ENCODE measurements at regions of chr11 and their contacts with region 1.

Region 1: DNA sequence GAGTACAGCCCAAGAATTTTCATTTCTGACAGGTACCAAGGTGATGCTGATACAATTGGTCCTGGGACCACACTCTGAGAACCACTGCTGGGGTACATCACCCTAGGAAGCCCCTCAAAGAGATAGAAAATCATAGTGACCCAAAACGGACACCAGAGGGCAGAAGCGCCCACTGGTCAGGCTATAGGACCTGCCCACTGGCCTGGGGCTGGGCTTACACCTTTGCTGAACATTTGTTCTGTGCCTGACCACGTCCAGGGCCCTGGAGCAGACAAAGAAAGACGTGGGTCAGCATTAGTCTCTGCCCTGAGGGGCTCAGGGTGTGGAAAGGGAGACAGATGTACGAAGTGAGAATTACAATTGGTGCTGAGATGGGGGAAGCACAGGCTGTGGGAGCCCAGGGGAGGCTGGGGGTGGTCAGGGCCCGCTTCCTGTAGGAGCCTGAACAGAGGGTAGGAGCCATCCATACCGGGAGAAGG is 14.4 kb upstream of the SERPINH1 start:
- DNase-seq: peak; percentile 64
- ATAC-seq: peak; percentile 93
- H3K4me3 ChIP-seq: no peak overlapping the region; a peak in 1 of 6 replicates
- H3K27ac ChIP-seq: no peak overlapping the region
- H3K4me1 ChIP-seq: peaks cover 6% of the 10 kb centered on the region; the same call in 1 of the 2 replicates
- H3K27me3 ChIP-seq: peaks cover 0 to 17% of the 10 kb centered on the region in 2 experiments; a peak in 3 of 5 replicates
- CTCF ChIP-seq: peak; percentile 92
- EP300 ChIP-seq: no peak
- POLR2A ChIP-seq: no peak
- RAD21 ChIP-seq: peak; percentile 81

Region 2: DNA sequence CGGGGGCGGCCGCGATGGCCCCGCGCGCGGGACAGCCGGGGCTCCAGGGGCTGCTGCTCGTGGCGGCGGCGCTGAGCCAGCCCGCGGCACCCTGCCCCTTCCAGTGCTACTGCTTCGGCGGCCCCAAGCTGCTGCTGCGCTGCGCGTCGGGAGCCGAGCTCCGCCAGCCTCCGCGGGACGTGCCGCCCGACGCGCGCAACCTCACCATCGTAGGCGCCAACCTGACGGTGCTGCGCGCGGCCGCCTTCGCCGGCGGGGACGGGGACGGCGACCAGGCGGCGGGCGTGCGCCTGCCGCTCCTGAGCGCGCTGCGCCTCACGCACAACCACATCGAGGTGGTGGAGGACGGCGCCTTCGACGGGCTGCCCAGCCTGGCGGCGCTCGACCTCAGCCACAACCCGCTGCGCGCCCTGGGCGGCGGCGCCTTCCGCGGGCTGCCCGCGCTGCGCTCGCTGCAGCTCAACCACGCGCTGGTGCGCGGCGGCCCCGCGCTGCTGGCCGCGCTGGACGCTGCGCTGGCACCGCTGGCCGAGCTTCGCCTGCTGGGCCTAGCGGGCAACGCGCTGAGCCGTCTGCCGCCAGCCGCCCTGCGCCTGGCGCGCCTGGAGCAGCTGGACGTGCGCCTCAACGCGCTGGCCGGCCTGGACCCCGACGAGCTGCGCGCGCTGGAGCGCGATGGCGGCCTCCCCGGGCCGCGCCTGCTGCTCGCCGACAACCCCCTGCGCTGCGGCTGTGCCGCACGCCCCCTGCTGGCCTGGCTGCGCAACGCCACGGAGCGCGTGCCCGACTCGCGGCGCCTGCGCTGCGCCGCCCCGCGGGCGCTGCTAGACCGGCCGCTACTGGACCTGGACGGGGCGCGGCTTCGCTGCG is 306.3 kb before region 1 on chr11:
- CTCF ChIA-PET with region 1: no interaction called
- POLR2A ChIA-PET with region 1: no interaction called
- in situ Hi-C with region 1: no loop called
- intact Hi-C with region 1: no loop called
- DNase-seq: peak; percentile 57
- ATAC-seq: peak; percentile 86
- H3K4me3 ChIP-seq: peak overlapping the region; percentile 46 to 74 (median 46); a peak in 5 of 6 replicates
- H3K27ac ChIP-seq: no peak overlapping the region
- H3K4me1 ChIP-seq: peaks cover 15% of the 10 kb centered on the region; the same call in 1 of the 2 replicates
- H3K27me3 ChIP-seq: peaks cover 15 to 63% of the 10 kb centered on the region in 2 experiments
- CTCF ChIP-seq: peak; percentile 76
- EP300 ChIP-seq: no peak
- POLR2A ChIP-seq: no peak
- RAD21 ChIP-seq: peak; percentile 97

Region 3: DNA sequence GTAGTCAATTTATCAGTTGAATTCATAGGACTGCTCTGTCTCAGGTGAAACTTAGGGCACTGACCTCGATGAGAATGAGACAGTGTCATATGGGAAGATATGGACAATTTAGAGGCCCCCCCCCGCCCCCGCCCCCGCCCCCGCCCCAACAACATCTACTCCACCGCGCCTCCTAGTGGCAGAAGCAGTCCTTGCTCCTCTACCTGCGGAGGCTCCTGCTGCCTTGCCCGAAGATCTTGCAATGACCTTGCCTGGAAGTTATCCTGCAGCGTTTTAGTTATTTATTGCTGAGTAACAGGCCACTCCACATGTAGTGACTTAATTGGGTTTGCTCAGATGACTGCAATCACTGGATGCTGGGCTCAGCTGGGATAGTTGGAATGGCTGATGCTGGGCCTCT is 29.6 kb after region 1 on chr11:
- CTCF ChIA-PET with region 1: interaction called, 16 read pairs
- POLR2A ChIA-PET with region 1: no interaction called
- in situ Hi-C with region 1: loop called (anchors 5 kb)
- intact Hi-C with region 1: loop called (anchors 1 kb)
- DNase-seq: no peak
- ATAC-seq: peak; percentile 32
- H3K4me3 ChIP-seq: no peak overlapping the region
- H3K27ac ChIP-seq: no peak overlapping the region
- H3K4me1 ChIP-seq: peaks cover 7% of the 10 kb centered on the region; the same call in 1 of the 2 replicates
- H3K27me3 ChIP-seq: peaks cover 0 to 4% of the 10 kb centered on the region in 2 experiments; a peak in 1 of 5 replicates
- CTCF ChIP-seq: peak; percentile 65
- EP300 ChIP-seq: no peak
- POLR2A ChIP-seq: no peak
- RAD21 ChIP-seq: no peak

Region 4: GRCh38 chr11:75706260-75706729 is 158.7 kb after region 1 on chr11:
- CTCF ChIA-PET with region 1: interaction called, 3 read pairs
- POLR2A ChIA-PET with region 1: no interaction called
- in situ Hi-C with region 1: no loop called
- intact Hi-C with region 1: loop called (anchors 5 kb)
- DNase-seq: peak; percentile 65
- ATAC-seq: peak; percentile 98
- H3K4me3 ChIP-seq: peak overlapping the region in 2 of 3 experiments; percentile 5 to 55; a peak in 2 of 6 replicates
- H3K27ac ChIP-seq: no peak overlapping the region
- H3K4me1 ChIP-seq: peaks cover 15% of the 10 kb centered on the region
- H3K27me3 ChIP-seq: no peaks in the 10 kb centered on the region; a peak in 1 of 5 replicates
- CTCF ChIP-seq: peak; percentile 99
- EP300 ChIP-seq: no peak
- POLR2A ChIP-seq: no peak
- RAD21 ChIP-seq: peak; percentile 88